CD8-positive, alpha-beta memory T cell (primary cell): ENCODE measurements at regions of chr15 and their contacts with region 1.

Region 1: DNA sequence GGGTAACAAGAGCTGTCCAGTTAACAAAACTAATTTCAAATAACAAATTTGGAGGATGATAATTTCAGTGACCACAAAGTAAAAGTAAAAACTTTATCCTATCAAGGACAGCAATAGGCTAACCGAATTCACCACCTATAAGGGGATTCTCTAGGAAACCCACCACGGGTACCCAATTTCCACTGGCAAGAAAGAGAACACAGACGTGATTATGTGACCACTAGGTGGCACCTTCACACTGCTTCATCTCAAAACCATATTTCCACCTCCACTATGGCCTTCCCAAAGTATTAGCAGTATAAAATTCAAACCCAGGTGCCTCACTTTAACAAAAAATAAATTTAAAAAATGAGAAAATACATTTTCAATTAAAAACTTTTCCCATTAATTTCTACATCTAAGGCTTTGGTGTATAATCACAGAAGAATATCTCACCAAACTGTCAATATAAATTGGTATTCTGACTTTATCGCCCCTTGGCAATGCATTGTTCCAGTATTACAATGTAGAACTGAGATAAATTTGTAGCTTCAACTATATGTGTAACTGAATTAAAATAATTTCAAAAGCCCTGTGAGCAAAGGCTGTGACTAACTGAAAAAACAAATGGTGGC is 96.5 kb downstream of the FSIP1 start:
- DNase-seq: peak in 3 of 5 donors; percentile 5 to 26 (median 25)
- H3K4me3 ChIP-seq: no peak overlapping the region
- H3K4me3 Mint-ChIP-seq: no peak overlapping the region
- H3K27ac ChIP-seq: no peak overlapping the region
- H3K27ac Mint-ChIP-seq: peak overlapping the region in 3 of 8 donors; percentile 24 to 58 (median 34)
- H3K4me1 ChIP-seq: no peaks in the 10 kb centered on the region
- H3K4me1 Mint-ChIP-seq: peaks cover 9 to 22% (median 17%) of the 10 kb centered on the region in 3 donors
- H3K27me3 ChIP-seq: no peaks in the 10 kb centered on the region
- H3K27me3 Mint-ChIP-seq: no peaks in the 10 kb centered on the region

Region 2: GRCh38 chr15:39381517-39381916 is 304.6 kb before region 1 on chr15:
- CTCF ChIA-PET with region 1: no interaction called
- POLR2A ChIA-PET with region 1: no interaction called
- DNase-seq: no peak
- H3K4me3 ChIP-seq: no peak overlapping the region
- H3K4me3 Mint-ChIP-seq: no peak overlapping the region
- H3K27ac ChIP-seq: no peak overlapping the region
- H3K27ac Mint-ChIP-seq: no peak overlapping the region
- H3K4me1 ChIP-seq: no peaks in the 10 kb centered on the region
- H3K4me1 Mint-ChIP-seq: no peaks in the 10 kb centered on the region
- H3K27me3 ChIP-seq: no peaks in the 10 kb centered on the region
- H3K27me3 Mint-ChIP-seq: peaks cover 3 to 11% of the 10 kb centered on the region in 2 donors

Region 3: DNA sequence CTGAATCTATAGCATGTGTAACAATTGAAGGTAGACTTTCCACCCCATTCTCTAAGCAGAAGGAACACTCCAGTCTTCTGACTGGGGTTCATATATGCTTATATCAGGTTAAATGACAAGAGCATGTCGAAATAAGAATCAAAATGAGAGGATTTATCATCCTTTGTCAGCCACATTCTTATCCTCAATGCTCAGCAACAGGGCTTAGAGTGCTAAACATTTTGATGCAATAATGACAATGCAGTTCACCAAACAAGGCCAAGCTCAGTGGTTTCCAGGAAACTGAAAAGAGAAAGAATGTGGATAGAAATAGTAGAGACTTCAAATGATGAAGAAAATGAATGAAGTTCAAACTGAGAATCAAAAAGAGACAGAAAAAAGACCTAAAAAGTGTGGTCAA is 18.6 kb after region 1 on chr15:
- CTCF ChIA-PET with region 1: no interaction called
- POLR2A ChIA-PET with region 1: no interaction called
- DNase-seq: no peak
- H3K4me3 ChIP-seq: no peak overlapping the region
- H3K4me3 Mint-ChIP-seq: no peak overlapping the region
- H3K27ac ChIP-seq: no peak overlapping the region
- H3K27ac Mint-ChIP-seq: no peak overlapping the region
- H3K4me1 ChIP-seq: no peaks in the 10 kb centered on the region
- H3K4me1 Mint-ChIP-seq: no peaks in the 10 kb centered on the region
- H3K27me3 ChIP-seq: no peaks in the 10 kb centered on the region
- H3K27me3 Mint-ChIP-seq: no peaks in the 10 kb centered on the region

Region 4: DNA sequence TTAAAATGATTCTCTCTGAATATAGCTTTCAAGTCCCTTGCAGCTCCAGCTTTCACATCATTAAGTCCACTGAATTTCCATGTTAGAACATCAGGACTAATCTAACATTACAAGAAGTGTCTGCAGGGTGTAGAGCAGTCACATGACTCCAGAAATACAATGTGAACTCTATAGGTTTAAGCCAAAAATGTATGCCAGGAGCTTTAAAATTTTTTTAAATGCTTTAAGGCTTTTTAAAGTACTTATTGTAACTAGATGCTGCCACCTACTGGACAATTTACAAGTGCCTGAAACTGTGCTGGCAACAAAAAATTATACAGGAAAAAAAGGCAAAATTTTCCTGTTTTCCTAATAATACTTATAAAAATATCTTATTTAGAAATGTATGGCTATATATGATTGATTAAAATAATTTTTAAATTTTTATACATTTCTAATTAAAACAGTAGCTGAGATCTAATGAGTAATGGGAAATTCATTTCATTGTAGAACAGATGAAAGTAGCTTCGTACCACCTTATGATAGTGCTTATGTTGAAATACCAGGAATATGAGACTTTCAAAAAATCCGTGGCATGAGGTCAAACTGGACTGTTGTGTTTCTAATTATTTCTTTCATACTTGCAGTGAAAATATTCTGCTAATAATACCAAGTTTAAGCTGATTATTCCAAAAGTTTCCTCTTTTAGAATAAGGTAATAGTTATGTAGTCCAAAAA is 70.9 kb after region 1 on chr15:
- CTCF ChIA-PET with region 1: interaction called, 13 read pairs
- POLR2A ChIA-PET with region 1: no interaction called
- DNase-seq: peak in 3 of 5 donors; percentile 6 to 42 (median 32)
- H3K4me3 ChIP-seq: no peak overlapping the region
- H3K4me3 Mint-ChIP-seq: no peak overlapping the region
- H3K27ac ChIP-seq: no peak overlapping the region
- H3K27ac Mint-ChIP-seq: no peak overlapping the region
- H3K4me1 ChIP-seq: no peaks in the 10 kb centered on the region
- H3K4me1 Mint-ChIP-seq: peaks cover 0 to 11% (median 0%) of the 10 kb centered on the region in 3 donors
- H3K27me3 ChIP-seq: no peaks in the 10 kb centered on the region
- H3K27me3 Mint-ChIP-seq: peaks cover 0 to 3% of the 10 kb centered on the region in 2 donors